Sigmoid colon (tissue), 7 donors: ENCODE measurements at regions of chr2 and their contacts with region 1.

Region 1: GRCh38 chr2:61065715-61066709 is at the start of gene SANBR:
- DNase-seq: peak; percentile 88
- H3K4me3 ChIP-seq: peak within 1 kb of the TSS; percentile 79 to 100 (median 92)
- H3K27ac ChIP-seq: peak within 1 kb of the TSS; percentile 85 to 88 (median 88)
- H3K4me1 ChIP-seq: peaks cover 0 to 13% (median 8%) of the 10 kb centered on the region in 4 donors
- H3K27me3 ChIP-seq: no peaks in the 10 kb centered on the region
- CTCF ChIP-seq: no peak
- EP300 ChIP-seq: no peak
- POLR2A ChIP-seq: no peak
- total RNA-seq, gene SANBR: 3.1 to 18.5 (median 13.5) TPM

Region 2: DNA sequence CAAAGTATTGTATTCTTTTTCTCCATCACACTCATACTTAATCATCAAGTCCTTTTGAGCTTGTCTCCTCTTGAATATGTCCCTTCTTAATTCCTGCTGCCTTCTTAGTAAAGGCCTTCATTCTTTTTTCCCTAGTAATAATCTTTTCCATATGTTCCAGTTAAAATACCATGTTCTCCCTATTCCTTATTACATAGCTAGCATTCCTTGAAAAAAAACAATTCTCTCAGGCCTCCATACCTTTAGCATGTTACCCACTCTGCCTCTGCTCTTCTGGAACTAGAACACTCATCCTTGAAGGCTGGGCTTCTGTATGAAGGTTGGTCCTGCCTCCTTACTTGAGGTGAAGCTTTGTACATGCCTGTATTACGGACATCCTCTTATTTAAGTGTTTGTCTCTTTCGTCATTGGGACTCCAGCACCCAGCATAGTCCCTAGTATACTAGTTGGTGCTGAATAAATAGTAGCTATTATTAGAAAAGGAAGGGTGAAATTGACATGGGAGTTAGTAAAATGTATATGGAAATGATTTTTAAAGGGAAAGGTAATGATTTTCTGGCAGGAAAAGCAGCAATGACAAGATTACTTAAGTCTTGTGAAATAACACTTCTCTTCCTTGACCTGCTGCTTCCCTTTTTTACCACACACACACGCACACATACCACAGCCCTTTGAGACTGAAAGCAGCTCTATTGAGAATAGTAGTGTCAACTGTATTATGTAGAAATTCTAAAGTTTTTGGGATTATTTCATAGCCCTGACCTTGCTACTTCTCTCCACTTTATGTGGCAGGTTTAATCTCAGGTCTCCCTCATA is 139.1 kb before region 1 on chr2:
- intact Hi-C with region 1: no loop called
- DNase-seq: no peak
- H3K4me3 ChIP-seq: no peak overlapping the region
- H3K27ac ChIP-seq: no peak overlapping the region
- H3K4me1 ChIP-seq: peaks cover 0 to 10% (median 3%) of the 10 kb centered on the region in 4 donors
- H3K27me3 ChIP-seq: no peaks in the 10 kb centered on the region
- CTCF ChIP-seq: no peak
- EP300 ChIP-seq: no peak
- POLR2A ChIP-seq: no peak

Region 3: GRCh38 chr2:61016808-61017555 is 49.0 kb before region 1 on chr2:
- intact Hi-C with region 1: loop called (anchors 5 kb)
- DNase-seq: peak; percentile 84
- H3K4me3 ChIP-seq: peak overlapping the region; percentile 80 to 96 (median 88)
- H3K27ac ChIP-seq: peak overlapping the region; percentile 91 to 96 (median 92)
- H3K4me1 ChIP-seq: peaks cover 0 to 34% (median 16%) of the 10 kb centered on the region in 4 donors
- H3K27me3 ChIP-seq: no peaks in the 10 kb centered on the region
- CTCF ChIP-seq: no peak
- EP300 ChIP-seq: no peak
- POLR2A ChIP-seq: peak in 1 of 2 donors; percentile 15

Region 4: DNA sequence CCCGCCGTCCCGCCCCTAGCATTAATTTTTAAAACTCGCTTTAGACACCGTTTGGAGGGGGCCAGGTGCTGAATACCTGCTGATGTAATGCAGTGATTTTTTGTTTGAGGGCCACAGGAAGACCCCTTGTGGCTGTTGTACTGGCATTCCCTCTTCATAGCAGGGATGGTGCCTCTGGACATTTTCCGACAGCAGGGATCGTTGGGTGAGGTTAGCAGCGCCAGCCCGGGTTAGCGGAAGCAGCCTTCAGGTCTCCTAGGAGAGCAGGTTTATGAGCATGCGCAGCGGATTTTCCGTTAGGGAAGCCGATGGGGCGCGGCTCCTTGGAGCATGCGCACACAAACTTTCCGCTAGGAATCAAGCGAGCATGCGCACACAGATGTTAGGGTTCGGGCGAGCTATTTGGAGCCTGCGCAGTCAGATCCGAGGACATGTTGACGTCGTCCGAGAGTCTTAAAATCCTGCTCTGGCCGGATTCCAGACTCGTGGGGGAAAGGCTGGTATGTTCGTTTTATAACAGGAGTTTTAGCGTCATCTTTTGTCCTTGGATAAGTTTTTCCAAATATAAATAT is 78.8 kb after region 1 on chr2:
- intact Hi-C with region 1: loop called (anchors 10 kb)
- DNase-seq: peak; percentile 99
- H3K4me3 ChIP-seq: peak overlapping the region; percentile 26 to 59 (median 58)
- H3K27ac ChIP-seq: peak overlapping the region; percentile 76 to 84 (median 81)
- H3K4me1 ChIP-seq: peaks cover 0 to 14% (median 7%) of the 10 kb centered on the region in 4 donors
- H3K27me3 ChIP-seq: no peaks in the 10 kb centered on the region
- CTCF ChIP-seq: no peak
- EP300 ChIP-seq: peak in 1 of 4 donors; percentile 31
- POLR2A ChIP-seq: peak; percentile 28 to 33

Region 5: DNA sequence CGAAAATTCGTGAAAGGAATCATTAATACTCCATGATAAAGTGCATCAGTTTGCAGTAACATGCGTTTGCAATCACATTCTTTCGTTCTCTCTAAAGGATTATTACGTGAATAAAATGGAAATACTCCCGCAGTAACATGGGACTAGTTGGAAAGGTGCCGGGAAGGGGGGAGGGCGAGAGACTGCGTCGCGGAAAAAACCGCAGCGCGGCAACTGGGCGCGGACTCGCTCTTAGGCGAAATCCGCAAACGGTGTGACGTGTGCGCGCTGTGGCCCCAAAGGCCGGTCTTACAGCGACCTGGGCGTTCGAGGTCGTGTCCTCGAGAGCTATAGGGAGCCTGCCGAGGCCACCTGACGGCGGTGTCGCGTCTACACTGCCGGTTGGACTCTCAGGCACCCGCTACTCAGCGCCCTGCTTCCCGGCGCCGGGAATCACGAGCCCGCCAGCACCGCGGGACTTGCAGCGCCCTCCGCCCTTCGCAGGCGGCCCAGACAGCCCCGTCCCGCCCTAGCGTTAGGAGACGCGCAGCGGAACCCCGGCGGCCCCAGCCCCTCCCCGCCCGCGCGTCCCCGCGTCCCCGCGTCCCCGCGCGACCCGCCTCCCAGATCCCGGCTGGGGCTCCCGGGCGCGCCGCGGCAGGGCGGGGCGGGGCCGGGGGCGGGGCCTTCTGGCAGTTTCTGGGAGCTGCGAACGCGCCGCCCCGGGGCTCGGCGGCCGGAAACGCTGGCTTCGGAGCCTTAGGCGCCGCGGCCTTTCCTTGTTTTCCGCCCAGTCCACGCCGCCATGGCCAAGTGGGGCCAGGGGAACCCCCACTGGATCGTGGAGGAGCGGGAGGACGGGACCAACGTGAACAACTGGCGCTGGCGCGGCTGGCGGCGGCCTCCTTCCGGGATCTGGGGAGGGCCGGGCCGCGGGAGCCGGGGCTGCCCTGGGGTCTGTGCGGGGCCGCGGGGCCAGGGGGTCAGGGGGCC is 111.0 kb after region 1 on chr2:
- intact Hi-C with region 1: loop called (anchors 5 kb)
- DNase-seq: peak; percentile 96
- H3K4me3 ChIP-seq: peak overlapping the region; percentile 74 to 94 (median 88)
- H3K27ac ChIP-seq: peak overlapping the region; percentile 97 to 99 (median 98)
- H3K4me1 ChIP-seq: peaks cover 0 to 47% (median 46%) of the 10 kb centered on the region in 4 donors
- H3K27me3 ChIP-seq: no peaks in the 10 kb centered on the region
- CTCF ChIP-seq: no peak
- EP300 ChIP-seq: peak in 2 of 4 donors; percentile 45 to 70
- POLR2A ChIP-seq: peak; percentile 64 to 79

Region 6: GRCh38 chr2:61726456-61727209 is 660.6 kb after region 1 on chr2:
- intact Hi-C with region 1: no loop called
- DNase-seq: no peak
- H3K4me3 ChIP-seq: no peak overlapping the region
- H3K27ac ChIP-seq: no peak overlapping the region
- H3K4me1 ChIP-seq: no peaks in the 10 kb centered on the region
- H3K27me3 ChIP-seq: no peaks in the 10 kb centered on the region
- CTCF ChIP-seq: no peak
- EP300 ChIP-seq: no peak
- POLR2A ChIP-seq: no peak